GM10248 (cell line): ENCODE measurements at regions of chr10 and their contacts with region 1.

Region 1: GRCh38 chr10:3961082-3961481 is 176.1 kb upstream of the KLF6 start:
- DNase-seq: no peak
- CTCF ChIP-seq: no peak

Region 2: DNA sequence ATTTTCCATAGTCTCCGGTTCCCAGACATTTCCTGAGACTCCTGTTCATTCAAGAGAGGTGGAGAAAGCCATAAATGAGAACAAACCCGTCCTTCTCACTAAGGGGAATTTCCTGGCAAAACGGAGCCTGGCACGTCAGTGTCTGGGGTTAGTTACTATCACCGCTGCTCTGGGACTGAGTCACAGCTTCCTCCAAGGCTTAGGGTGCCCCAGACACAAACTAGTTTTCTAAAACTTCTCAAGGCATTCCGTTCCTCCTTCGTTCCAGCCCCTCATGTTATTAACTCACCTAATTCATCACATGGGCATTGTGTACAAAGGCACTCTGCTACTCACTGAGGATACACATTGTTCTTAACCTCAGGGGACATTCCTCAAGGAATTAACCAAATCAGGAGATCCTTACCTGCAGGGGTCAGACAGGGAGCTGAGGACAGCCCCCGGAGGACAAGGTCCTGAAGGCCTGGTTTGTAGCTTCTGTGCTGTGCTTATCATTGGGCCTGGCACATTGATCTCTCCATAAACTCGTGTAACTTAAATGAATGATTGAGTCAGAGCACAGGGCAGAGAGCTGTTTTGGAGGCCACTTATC is 73.1 kb before region 1 on chr10:
- CTCF ChIA-PET with region 1: no interaction called
- POLR2A ChIA-PET with region 1: no interaction called
- DNase-seq: peak; percentile 49
- CTCF ChIP-seq: no peak

Region 3: DNA sequence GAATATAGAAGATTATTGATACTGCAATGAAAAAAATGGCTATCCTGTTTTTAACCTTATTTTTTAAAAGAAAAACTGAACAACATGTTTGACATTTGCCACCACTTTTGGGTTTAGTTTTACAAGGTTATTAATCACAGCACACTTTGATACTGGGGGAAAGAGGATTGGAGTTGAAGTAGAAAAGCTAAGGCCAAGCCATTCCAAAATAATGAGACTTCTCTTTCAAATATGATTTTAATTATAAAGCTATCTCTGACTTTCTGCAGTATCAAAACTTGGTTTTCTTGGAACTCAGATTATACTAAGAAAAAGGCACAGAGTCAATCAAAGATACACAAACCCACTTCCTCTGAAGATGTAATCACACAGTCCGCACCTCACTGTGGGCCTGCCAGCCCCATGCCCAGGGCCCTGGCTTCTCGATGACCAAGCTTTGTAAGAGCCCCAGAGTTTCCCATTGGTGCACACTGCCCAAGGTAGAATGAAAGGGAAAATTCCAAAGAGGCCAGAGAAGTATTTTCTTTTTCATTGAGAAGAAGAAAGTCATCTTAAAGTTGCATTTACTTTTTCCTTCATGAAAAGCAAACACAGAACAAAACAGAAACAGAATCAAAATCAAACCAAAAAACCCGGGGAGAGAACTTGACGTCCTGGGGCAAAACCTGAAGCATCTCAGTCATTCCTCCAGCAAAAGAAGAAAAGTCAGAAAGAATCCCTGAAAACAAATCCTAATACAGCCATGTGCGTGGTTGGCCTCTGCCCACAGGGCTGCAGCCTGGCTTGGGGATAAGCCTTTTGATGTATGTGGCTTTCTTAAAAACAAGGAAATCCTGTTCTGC is 11.6 kb after region 1 on chr10:
- CTCF ChIA-PET with region 1: interaction called, 12 read pairs
- POLR2A ChIA-PET with region 1: no interaction called
- DNase-seq: no peak
- CTCF ChIP-seq: no peak